Posterior vena cava (tissue), 2 donors: ENCODE measurements at regions of chr12 and their contacts with region 1.

Region 1: GRCh38 chr12:3931746-3932145 is 58.5 kb upstream of the PARP11 start:
- DNase-seq: no peak

Region 2: GRCh38 chr12:3863756-3864329 is 67.9 kb before region 1 on chr12:
- intact Hi-C with region 1: loop called in 1 of 2 experiments (anchors 2 kb)
- DNase-seq: no peak

Region 3: GRCh38 chr12:4366090-4366489 is 434.3 kb after region 1 on chr12:
- intact Hi-C with region 1: no loop called
- DNase-seq: no peak